Aorta (tissue), 5 donors: ENCODE measurements at regions of chr11 and their contacts with region 1.

Region 1: GRCh38 chr11:30855383-30856006 is 269.3 kb upstream of the MPPED2 start:
- DNase-seq: no peak
- ATAC-seq: peak; percentile 62
- H3K4me3 ChIP-seq: no peak overlapping the region
- H3K27ac ChIP-seq: no peak overlapping the region
- H3K4me1 ChIP-seq: no peaks in the 10 kb centered on the region
- H3K27me3 ChIP-seq: no peaks in the 10 kb centered on the region

Region 2: DNA sequence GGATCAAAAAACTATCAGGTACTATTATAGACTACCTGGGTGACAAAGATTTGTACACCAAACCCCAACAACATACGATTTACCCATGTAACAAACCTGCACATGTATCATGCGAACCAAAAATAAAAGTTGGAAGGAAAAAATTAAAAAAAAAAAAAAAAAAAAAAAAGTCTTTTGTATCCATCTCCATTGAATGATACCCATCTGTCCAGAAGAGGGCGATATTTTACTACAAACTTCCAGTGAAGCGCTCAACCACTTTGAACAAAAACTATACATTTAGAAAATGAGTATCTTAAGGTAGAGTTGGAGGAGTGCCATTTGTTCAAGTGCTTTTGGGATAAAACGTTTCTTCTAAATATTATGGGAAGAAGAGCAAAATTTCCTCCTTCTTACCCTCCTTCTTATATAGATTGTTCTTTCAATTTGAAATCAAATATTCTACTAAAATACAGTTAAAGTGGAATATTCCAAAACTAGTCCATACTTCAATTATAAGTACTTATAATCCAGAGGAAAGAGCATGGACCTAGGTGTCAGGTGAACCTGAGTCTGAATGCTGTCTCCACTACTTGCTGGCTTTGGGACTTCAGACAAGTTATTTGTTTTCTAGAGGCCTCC is 509.3 kb before region 1 on chr11:
- intact Hi-C with region 1: loop called (anchors 1 to 2 kb)
- DNase-seq: no peak
- ATAC-seq: peak; percentile 65
- H3K4me3 ChIP-seq: no peak overlapping the region
- H3K27ac ChIP-seq: no peak overlapping the region
- H3K4me1 ChIP-seq: no peaks in the 10 kb centered on the region
- H3K27me3 ChIP-seq: no peaks in the 10 kb centered on the region

Region 3: GRCh38 chr11:30586251-30587144 is 269.0 kb before region 1 on chr11 and contains the start of gene MPPED2:
- intact Hi-C with region 1: loop called in 1 of 2 experiments (anchors 5 kb)
- DNase-seq: peak; percentile 72 to 83
- ATAC-seq: peak; percentile 65
- H3K4me3 ChIP-seq: peak within 1 kb of the TSS; percentile 91 to 94
- H3K27ac ChIP-seq: peak within 1 kb of the TSS; percentile 78 to 90
- H3K4me1 ChIP-seq: no peaks in the 10 kb centered on the region
- H3K27me3 ChIP-seq: no peaks in the 10 kb centered on the region
- total RNA-seq, gene MPPED2: 7.5 to 20.4 TPM

Region 4: GRCh38 chr11:30605036-30605605 is 250.4 kb before region 1 on chr11:
- intact Hi-C with region 1: loop called in 1 of 2 experiments (anchors 10 kb)
- DNase-seq: no peak
- ATAC-seq: no peak
- H3K4me3 ChIP-seq: no peak overlapping the region
- H3K27ac ChIP-seq: no peak overlapping the region
- H3K4me1 ChIP-seq: no peaks in the 10 kb centered on the region
- H3K27me3 ChIP-seq: no peaks in the 10 kb centered on the region

Region 5: GRCh38 chr11:30735946-30736345 is 119.5 kb before region 1 on chr11:
- intact Hi-C with region 1: loop called in 1 of 2 experiments (anchors 5 kb)
- DNase-seq: no peak
- ATAC-seq: no peak
- H3K4me3 ChIP-seq: no peak overlapping the region
- H3K27ac ChIP-seq: no peak overlapping the region
- H3K4me1 ChIP-seq: peaks cover 0 to 2% of the 10 kb centered on the region in 2 donors
- H3K27me3 ChIP-seq: no peaks in the 10 kb centered on the region

Region 6: GRCh38 chr11:30917859-30918478 is 62.5 kb after region 1 on chr11:
- intact Hi-C with region 1: loop called in 1 of 2 experiments (anchors 5 kb)
- DNase-seq: no peak
- ATAC-seq: no peak
- H3K4me3 ChIP-seq: no peak overlapping the region
- H3K27ac ChIP-seq: no peak overlapping the region
- H3K4me1 ChIP-seq: no peaks in the 10 kb centered on the region
- H3K27me3 ChIP-seq: no peaks in the 10 kb centered on the region